Aorta (tissue), 5 donors: ENCODE measurements at regions of chr9 and their contacts with region 1.

Region 1: DNA sequence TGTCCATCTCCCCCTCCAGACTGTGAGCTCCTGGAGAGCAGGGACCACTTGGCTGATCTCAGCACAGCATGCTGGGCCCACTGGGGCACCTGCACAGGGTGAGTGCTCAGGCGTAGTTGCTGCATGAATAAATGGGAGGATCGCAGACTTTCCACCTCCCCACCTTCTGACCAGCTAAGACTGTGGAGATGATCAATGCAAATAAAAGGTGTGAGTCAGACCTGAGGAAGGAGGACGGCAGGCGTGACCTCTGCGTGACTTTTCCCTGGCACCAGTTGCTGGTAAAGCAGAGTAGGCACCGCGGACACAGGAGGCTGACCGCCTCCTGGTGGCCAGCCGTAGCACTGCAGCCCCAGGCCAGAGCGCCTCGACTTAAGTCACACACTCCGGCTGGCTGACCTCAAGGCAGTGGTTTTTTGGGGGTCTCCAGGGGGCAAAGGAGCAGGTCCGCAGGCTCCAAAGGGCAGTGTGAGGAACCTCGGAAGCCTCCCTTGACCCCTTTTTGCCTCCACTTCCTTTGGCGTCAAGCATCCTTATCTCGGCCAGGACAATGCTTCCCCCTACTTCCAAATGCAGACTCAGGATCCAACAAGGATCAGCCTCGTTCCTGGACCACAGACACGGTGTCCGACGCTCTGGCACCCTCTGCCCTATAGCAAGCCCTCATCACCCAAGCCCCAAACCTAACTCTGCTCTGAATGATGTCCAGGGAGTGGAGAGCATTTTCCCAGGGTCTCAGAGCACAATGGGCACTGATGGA is 12.7 kb upstream of the TDRD7 start:
- DNase-seq: peak; percentile 75 to 88
- ATAC-seq: peak; percentile 76
- H3K4me3 ChIP-seq: no peak overlapping the region
- H3K27ac ChIP-seq: no peak overlapping the region
- H3K4me1 ChIP-seq: no peaks in the 10 kb centered on the region
- H3K27me3 ChIP-seq: no peaks in the 10 kb centered on the region

Region 2: GRCh38 chr9:96854073-96854876 is 544.9 kb before region 1 on chr9 and contains the start of gene ZNF782:
- intact Hi-C with region 1: loop called (anchors 1 to 5 kb)
- DNase-seq: peak; percentile 94 to 96
- ATAC-seq: peak; percentile 97
- H3K4me3 ChIP-seq: peak within 1 kb of the TSS; percentile 23 to 92
- H3K27ac ChIP-seq: peak within 1 kb of the TSS in 1 of 2 donors; percentile 1
- H3K4me1 ChIP-seq: peaks cover 0 to 3% of the 10 kb centered on the region in 2 donors
- H3K27me3 ChIP-seq: no peaks in the 10 kb centered on the region
- total RNA-seq, gene ZNF782: 6.7 to 9.5 TPM

Region 3: DNA sequence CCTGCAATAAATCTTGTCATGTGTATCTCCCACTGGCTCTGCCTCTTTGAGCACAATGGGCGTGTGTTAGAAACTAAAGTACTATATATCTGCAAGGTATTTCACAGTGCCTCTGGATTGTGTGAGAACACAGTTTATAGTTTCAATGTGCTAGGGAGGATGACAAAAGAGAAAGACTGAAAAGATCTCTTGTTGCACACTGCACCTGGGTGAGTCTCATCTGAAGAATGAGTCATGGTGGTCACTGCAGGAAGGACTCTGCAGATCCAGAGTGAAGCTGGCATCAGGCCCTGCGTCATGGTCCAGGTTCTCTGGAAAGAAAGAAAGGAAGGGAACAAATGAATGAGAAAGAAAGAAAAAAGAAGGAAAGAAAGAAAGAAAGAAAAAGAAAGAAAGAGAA is 339.5 kb before region 1 on chr9:
- intact Hi-C with region 1: no loop called
- DNase-seq: no peak
- ATAC-seq: no peak
- H3K4me3 ChIP-seq: no peak overlapping the region
- H3K27ac ChIP-seq: no peak overlapping the region
- H3K4me1 ChIP-seq: no peaks in the 10 kb centered on the region
- H3K27me3 ChIP-seq: no peaks in the 10 kb centered on the region